Caco-2 (cell line): ENCODE measurements at regions of chr12 and their contacts with region 1.

Region 1: DNA sequence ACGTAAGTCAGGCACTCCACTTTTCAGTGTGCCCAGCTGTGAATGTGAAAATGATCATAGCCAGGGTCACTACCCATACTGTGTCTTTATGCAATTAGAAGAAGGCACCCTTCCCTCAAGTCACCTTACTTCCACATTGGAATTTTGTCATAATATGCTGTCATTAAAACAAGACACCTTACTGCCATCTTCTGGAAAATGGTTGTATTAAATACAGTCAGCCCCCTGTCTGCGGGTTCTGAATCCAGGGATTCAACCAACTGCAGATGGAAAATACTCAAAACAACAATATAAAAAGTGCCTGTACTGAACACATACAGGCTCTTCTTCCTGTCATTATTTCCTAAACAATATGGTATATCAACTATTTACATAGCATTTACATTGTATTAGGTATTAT is 70.2 kb upstream of the TBX5 start:
- DNase-seq: peak in 1 of 2 experiments; percentile 41
- H3K4me3 ChIP-seq: no peak overlapping the region
- H3K4me3 Mint-ChIP-seq: no peak overlapping the region
- H3K27ac Mint-ChIP-seq: no peak overlapping the region
- H3K4me1 ChIP-seq: no peaks in the 10 kb centered on the region
- H3K4me1 Mint-ChIP-seq: peaks cover 2% of the 10 kb centered on the region
- H3K27me3 ChIP-seq: no peaks in the 10 kb centered on the region
- H3K27me3 Mint-ChIP-seq: peaks cover 32% of the 10 kb centered on the region
- CTCF ChIP-seq: peak; percentile 58 to 65

Region 2: DNA sequence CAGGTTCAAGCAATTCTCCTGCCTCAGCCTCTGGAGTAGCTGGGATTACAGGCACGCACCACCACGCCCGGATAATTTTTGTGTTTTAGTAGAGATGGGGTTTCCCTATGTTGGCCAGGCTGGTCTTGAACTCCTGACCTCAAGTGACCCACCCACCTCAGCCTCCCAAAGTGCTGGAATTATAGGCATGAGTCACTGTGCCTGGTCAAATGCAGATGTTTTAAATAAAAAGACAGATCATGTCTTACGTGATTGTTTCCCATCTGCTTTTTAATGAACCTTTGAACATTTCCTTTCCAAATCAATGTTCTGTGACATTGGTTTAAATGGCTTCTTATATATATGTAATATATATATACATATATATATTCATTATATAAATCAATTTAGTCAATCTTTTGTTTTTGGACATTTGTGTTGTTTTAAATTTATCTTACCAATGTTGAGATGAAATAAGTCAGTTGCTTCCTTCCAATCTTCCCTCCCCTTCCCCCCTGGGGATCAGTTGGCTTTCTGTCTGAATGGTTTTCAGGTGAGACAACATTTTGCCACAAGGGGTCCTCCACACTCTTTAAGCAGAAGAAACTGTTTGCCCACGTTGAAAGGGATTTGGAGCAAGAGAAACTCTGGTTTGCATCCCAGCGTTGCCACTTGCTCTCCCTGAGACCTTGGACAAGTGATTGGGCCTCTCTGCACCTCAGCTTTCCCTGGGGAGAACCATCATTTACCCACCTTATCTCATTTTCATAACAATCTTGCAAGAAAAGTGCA is 462.4 kb before region 1 on chr12:
- CTCF ChIA-PET with region 1: no interaction called
- POLR2A ChIA-PET with region 1: no interaction called
- intact Hi-C with region 1: loop called (anchors 1 kb)
- DNase-seq: peak; percentile 40 to 41
- H3K4me3 ChIP-seq: no peak overlapping the region
- H3K4me3 Mint-ChIP-seq: no peak overlapping the region
- H3K27ac Mint-ChIP-seq: no peak overlapping the region
- H3K4me1 ChIP-seq: no peaks in the 10 kb centered on the region
- H3K4me1 Mint-ChIP-seq: no peaks in the 10 kb centered on the region
- H3K27me3 ChIP-seq: no peaks in the 10 kb centered on the region
- H3K27me3 Mint-ChIP-seq: peaks cover 3% of the 10 kb centered on the region
- CTCF ChIP-seq: peak; percentile 32 to 54

Region 3: DNA sequence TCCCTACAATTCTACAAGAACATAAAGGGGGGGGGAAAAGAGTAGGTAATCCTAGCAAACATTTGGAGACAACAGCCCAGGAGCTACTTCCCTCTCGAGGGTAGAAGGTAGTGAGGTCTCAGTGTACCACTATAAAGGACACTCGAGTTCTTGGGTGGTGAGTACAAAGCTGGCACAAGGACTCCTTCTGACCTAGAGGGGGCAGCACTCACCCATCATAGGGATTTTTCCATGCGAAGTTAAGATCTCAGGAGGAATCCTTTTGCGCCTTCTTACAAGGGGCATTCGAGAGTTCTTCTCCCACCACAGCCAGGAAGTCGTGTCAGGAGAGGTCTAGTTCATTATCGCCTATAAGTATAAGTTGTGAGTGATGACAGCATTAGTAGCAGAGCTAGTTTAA is 309.8 kb before region 1 on chr12:
- CTCF ChIA-PET with region 1: interaction called, 3 read pairs
- POLR2A ChIA-PET with region 1: no interaction called
- intact Hi-C with region 1: loop called (anchors 1 kb)
- DNase-seq: peak in 1 of 2 experiments; percentile 38
- H3K4me3 ChIP-seq: no peak overlapping the region
- H3K4me3 Mint-ChIP-seq: no peak overlapping the region
- H3K27ac Mint-ChIP-seq: no peak overlapping the region
- H3K4me1 ChIP-seq: no peaks in the 10 kb centered on the region
- H3K4me1 Mint-ChIP-seq: no peaks in the 10 kb centered on the region
- H3K27me3 ChIP-seq: no peaks in the 10 kb centered on the region; the same call in 1 of the 2 replicates
- H3K27me3 Mint-ChIP-seq: peaks cover 8% of the 10 kb centered on the region
- CTCF ChIP-seq: peak; percentile 43 to 52

Region 4: DNA sequence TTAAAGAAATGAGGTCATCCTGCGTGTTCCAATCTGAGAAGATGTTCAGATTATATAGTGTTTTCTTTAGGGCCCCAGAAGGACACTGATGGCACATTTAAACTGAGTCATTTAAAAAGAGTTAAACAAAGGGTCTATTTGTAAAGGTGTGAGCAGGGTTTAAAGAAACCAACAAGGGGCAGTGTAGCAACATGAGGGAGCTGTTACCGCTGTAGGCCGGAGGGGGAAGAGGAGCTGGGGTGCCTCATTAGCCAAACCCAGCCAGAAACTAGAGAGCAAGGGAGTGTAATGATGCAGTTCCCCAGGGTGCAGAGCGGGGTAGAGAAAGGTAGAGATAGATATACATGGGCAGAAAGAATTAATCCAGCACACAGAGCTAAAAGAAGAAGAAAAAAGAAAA is 230.6 kb before region 1 on chr12:
- CTCF ChIA-PET with region 1: no interaction called
- POLR2A ChIA-PET with region 1: no interaction called
- intact Hi-C with region 1: loop called (anchors 10 kb)
- DNase-seq: peak in 1 of 2 experiments; percentile 5
- H3K4me3 ChIP-seq: no peak overlapping the region
- H3K4me3 Mint-ChIP-seq: no peak overlapping the region
- H3K27ac Mint-ChIP-seq: no peak overlapping the region
- H3K4me1 ChIP-seq: no peaks in the 10 kb centered on the region
- H3K4me1 Mint-ChIP-seq: peaks cover 6% of the 10 kb centered on the region
- H3K27me3 ChIP-seq: no peaks in the 10 kb centered on the region
- H3K27me3 Mint-ChIP-seq: peaks cover 14% of the 10 kb centered on the region
- CTCF ChIP-seq: no peak

Region 5: DNA sequence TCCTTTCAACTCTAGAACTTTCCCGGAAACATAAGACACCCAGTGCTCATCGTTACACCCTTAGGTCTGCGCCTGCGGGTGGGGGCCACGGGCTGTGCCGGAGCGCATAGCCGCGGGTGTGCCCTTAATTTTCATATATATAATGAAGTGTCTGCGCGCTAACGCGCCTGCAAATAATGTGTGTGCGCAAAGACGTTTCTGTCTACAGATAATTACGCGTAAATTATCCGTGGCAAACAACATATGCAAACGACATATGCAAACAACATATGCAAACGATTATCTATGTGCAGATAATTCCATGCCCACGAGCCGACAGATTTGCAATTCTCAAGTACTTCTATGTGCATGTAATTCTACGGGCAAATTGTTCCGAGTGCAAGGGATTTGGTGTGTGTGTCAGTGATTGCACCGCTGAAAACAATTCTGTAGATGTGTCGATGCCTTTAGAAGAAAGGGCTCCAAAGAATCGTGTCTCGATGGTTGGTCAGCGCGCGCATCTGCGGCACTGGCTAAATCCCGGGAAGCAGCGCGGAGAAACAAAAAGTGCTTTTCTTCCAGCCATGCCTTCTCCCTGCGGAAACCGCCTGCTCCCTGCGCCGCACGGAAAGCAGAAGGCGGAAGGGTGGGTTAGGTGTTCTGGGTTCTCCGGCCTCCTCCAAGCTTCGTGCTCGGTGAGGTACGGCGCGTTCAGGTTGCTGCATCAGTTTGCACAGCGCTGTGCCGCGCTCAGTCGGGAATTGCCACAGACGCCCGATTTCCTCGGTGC is 35.7 kb before region 1 on chr12:
- CTCF ChIA-PET with region 1: no interaction called
- POLR2A ChIA-PET with region 1: no interaction called
- intact Hi-C with region 1: no loop called
- DNase-seq: no peak
- H3K4me3 ChIP-seq: no peak overlapping the region
- H3K4me3 Mint-ChIP-seq: no peak overlapping the region
- H3K27ac Mint-ChIP-seq: no peak overlapping the region
- H3K4me1 ChIP-seq: no peaks in the 10 kb centered on the region
- H3K4me1 Mint-ChIP-seq: no peaks in the 10 kb centered on the region
- H3K27me3 ChIP-seq: peaks cover 1% of the 10 kb centered on the region; the same call in 1 of the 2 replicates
- H3K27me3 Mint-ChIP-seq: peaks cover 15% of the 10 kb centered on the region
- CTCF ChIP-seq: no peak

Region 6: GRCh38 chr12:114529966-114530365 is 53.8 kb after region 1 on chr12:
- CTCF ChIA-PET with region 1: no interaction called
- POLR2A ChIA-PET with region 1: no interaction called
- intact Hi-C with region 1: no loop called
- DNase-seq: no peak
- H3K4me3 ChIP-seq: no peak overlapping the region
- H3K4me3 Mint-ChIP-seq: no peak overlapping the region
- H3K27ac Mint-ChIP-seq: no peak overlapping the region
- H3K4me1 ChIP-seq: no peaks in the 10 kb centered on the region
- H3K4me1 Mint-ChIP-seq: no peaks in the 10 kb centered on the region
- H3K27me3 ChIP-seq: no peaks in the 10 kb centered on the region; the same call in 1 of the 2 replicates
- H3K27me3 Mint-ChIP-seq: peaks cover 10% of the 10 kb centered on the region
- CTCF ChIP-seq: no peak